HepG2 (cell line): ENCODE measurements at regions of chr19 and their contacts with region 1.

Region 1: DNA sequence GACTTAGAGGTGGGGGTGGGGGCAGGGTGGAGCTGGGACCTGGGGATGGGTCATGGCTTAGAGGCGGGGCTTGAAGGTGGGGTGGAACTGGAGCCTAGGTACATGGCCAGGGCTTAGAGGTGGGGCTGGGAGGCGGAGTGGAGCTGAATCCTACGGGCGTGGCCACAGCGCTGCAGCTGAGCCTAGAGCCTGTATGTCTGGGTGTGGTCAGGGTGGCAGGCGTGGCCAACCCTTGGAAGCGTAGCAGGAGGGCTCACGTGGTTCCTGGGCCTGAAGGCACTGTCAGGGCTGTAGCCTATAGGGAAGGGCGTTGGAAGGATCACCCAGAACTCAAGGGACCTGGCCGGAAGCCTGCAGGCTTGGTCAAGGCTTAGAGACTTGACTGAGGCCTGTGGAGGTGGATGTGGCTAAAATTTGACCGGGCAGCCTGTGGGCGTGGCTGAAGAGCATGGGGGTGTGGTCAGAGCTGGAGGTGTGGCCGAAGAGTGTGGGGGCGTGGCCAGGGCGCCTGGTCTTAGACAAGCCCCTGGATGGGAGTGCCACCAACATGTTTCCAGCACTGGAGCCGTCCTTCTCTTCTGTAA is 24.3 kb downstream of the COLGALT1 start:
- DNase-seq: no peak
- ATAC-seq: peak; percentile 69
- H3K4me3 ChIP-seq: no peak overlapping the region
- H3K27ac ChIP-seq: no peak overlapping the region
- H3K4me1 ChIP-seq: no peaks in the 10 kb centered on the region
- H3K27me3 ChIP-seq: no peaks in the 10 kb centered on the region
- CTCF ChIP-seq: no peak
- EP300 ChIP-seq: no peak
- POLR2A ChIP-seq: no peak
- RAD21 ChIP-seq: no peak

Region 2: GRCh38 chr19:17539238-17540117 is 40.3 kb before region 1 on chr19:
- CTCF ChIA-PET with region 1: no interaction called
- POLR2A ChIA-PET with region 1: no interaction called
- in situ Hi-C with region 1: no loop called
- intact Hi-C with region 1: loop called (anchors 1 kb)
- DNase-seq: peak; percentile 85
- ATAC-seq: peak; percentile 86
- H3K4me3 ChIP-seq: peak overlapping the region; percentile 47 to 71 (median 56)
- H3K27ac ChIP-seq: no peak overlapping the region
- H3K4me1 ChIP-seq: peaks cover 19% of the 10 kb centered on the region
- H3K27me3 ChIP-seq: peaks cover 0 to 23% of the 10 kb centered on the region in 2 experiments; a peak in 3 of 5 replicates
- CTCF ChIP-seq: peak; percentile 74
- EP300 ChIP-seq: no peak
- POLR2A ChIP-seq: no peak
- RAD21 ChIP-seq: 0 out of 2 replicates have a peak, but pooled peaks have one; percentile 25

Region 3: DNA sequence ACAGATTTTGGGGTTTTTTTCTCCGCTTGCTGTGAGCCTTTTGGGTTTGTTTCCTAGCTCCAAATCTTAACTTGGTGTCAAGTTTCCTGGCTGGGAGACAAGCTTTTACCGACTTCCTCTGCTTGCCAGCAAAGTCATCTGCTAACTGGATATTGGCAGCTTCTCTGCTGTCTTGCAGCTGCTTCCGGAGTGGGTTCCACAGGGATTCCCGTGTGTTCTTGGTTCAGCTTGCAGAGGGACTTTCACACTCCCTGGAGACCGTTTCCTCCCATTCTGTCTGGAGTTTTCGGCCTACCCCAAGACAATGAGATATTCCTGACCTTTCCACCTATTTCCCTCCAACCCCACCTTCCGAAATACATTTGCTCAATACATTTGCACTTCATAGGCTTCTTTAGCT is 26.5 kb before region 1 on chr19:
- CTCF ChIA-PET with region 1: no interaction called
- POLR2A ChIA-PET with region 1: no interaction called
- in situ Hi-C with region 1: no loop called
- intact Hi-C with region 1: no loop called
- DNase-seq: no peak
- ATAC-seq: no peak
- H3K4me3 ChIP-seq: no peak overlapping the region
- H3K27ac ChIP-seq: no peak overlapping the region
- H3K4me1 ChIP-seq: peaks cover 40% of the 10 kb centered on the region
- H3K27me3 ChIP-seq: no peaks in the 10 kb centered on the region
- CTCF ChIP-seq: no peak
- EP300 ChIP-seq: no peak
- POLR2A ChIP-seq: no peak
- RAD21 ChIP-seq: no peak